GM12878 (cell line): ENCODE measurements at regions of chr14 and their contacts with region 1.

Region 1: GRCh38 chr14:75709207-75709812 is 48.3 kb downstream of the TTLL5 start:
- DNase-seq: peak; percentile 24
- ATAC-seq: peak; percentile 84
- H3K4me3 ChIP-seq: no peak overlapping the region
- H3K27ac ChIP-seq: no peak overlapping the region
- H3K4me1 ChIP-seq: peaks cover 6% of the 10 kb centered on the region
- H3K27me3 ChIP-seq: no peaks in the 10 kb centered on the region
- CTCF ChIP-seq: peak; percentile 75 to 81 (median 81)
- EP300 ChIP-seq: no peak
- POLR2A ChIP-seq: no peak
- RAD21 ChIP-seq: peak; percentile 82

Region 2: DNA sequence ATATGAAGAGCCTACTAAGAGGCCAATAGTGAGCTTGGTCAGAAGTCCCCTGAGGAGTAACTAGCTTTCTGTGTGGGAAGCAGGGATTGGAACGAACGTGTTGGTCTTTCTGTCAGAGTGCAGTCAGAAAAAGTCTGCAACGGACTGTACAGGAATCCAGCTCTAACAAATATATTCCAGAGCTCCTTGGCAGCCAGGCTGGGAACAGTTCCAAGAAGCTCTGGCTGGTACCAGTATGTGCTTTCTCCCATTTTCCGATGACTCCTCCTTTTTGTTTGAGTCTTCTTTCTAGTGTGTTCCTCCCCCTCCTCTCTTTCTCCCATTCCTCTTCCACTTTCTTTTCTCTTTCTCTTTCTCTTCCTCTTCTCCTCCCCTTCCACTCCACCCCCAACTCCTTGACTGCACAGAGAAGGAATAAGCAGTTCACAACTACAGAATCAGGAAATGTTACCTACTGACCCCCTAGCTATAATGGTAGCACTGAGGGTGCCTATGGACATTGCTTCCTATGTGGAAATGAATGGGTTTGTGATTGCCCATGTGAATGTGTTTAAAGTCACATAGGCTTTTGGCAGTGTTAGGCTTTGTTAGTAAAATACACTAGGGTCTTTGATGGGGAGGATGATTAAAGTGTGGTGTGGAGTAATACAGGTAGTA is 11.7 kb after region 1 on chr14:
- CTCF ChIA-PET with region 1: interaction called, 12 read pairs
- POLR2A ChIA-PET with region 1: no interaction called
- RAD21 ChIA-PET with region 1: interaction called, 5 read pairs
- SMC1A ChIA-PET with region 1: interaction called, 7 read pairs
- in situ Hi-C with region 1: no loop called
- intact Hi-C with region 1: no loop called
- DNase-seq: no peak
- ATAC-seq: no peak
- H3K4me3 ChIP-seq: no peak overlapping the region
- H3K27ac ChIP-seq: no peak overlapping the region
- H3K4me1 ChIP-seq: peaks cover 6% of the 10 kb centered on the region
- H3K27me3 ChIP-seq: no peaks in the 10 kb centered on the region
- CTCF ChIP-seq: no peak
- EP300 ChIP-seq: no peak
- POLR2A ChIP-seq: no peak
- RAD21 ChIP-seq: no peak

Region 3: GRCh38 chr14:75794615-75795038 is 85.3 kb after region 1 on chr14:
- CTCF ChIA-PET with region 1: interaction called, 36 read pairs
- POLR2A ChIA-PET with region 1: interaction called, 7 read pairs
- RAD21 ChIA-PET with region 1: interaction called, 25 read pairs
- SMC1A ChIA-PET with region 1: interaction called, 44 read pairs
- in situ Hi-C with region 1: no loop called
- intact Hi-C with region 1: no loop called
- DNase-seq: no peak
- ATAC-seq: peak; percentile 40; the same call in 2 of the 3 replicates
- H3K4me3 ChIP-seq: no peak overlapping the region
- H3K27ac ChIP-seq: no peak overlapping the region
- H3K4me1 ChIP-seq: no peaks in the 10 kb centered on the region
- H3K27me3 ChIP-seq: no peaks in the 10 kb centered on the region
- CTCF ChIP-seq: peak in 2 of 3 experiments; percentile 17 to 37; a peak in 2 of 6 replicates
- EP300 ChIP-seq: no peak
- POLR2A ChIP-seq: no peak
- RAD21 ChIP-seq: no peak

Region 4: DNA sequence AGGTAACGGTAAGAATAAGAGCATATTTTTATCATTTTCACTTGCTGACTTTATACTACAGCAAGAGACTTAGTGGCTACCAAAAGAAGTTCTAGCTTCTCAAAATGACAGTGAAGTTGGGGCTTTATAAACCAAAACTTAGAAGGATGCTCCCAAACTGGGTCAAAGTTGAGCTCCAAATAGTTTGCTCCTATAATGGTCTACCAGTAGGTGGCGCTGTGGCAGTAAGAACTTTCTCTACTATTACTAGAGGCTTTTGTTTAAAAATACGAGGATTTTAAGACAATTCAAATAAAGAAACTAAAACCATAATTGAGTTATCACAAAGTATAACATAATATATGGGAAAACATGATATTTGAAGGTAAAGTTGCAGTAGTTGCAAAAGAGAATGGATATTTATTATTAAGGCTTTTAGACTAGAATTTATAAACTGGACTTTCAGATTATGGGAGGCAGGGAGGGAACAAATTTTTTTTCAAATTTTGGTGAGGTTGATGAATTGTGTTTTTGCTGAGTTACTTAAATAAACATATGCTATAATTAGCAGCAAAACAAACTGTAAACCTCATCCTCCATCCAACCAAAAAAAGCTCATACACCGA is 197.5 kb after region 1 on chr14:
- CTCF ChIA-PET with region 1: interaction called, 100 read pairs
- POLR2A ChIA-PET with region 1: no interaction called
- RAD21 ChIA-PET with region 1: interaction called, 68 read pairs
- SMC1A ChIA-PET with region 1: interaction called, 63 read pairs
- in situ Hi-C with region 1: no loop called
- intact Hi-C with region 1: loop called (anchors 10 kb)
- DNase-seq: no peak
- ATAC-seq: peak; percentile 73
- H3K4me3 ChIP-seq: no peak overlapping the region
- H3K27ac ChIP-seq: no peak overlapping the region
- H3K4me1 ChIP-seq: no peaks in the 10 kb centered on the region
- H3K27me3 ChIP-seq: no peaks in the 10 kb centered on the region
- CTCF ChIP-seq: peak; percentile 69 to 78 (median 71)
- EP300 ChIP-seq: no peak
- POLR2A ChIP-seq: no peak
- RAD21 ChIP-seq: peak; percentile 85

Region 5: GRCh38 chr14:75982266-75983018 is 273.1 kb after region 1 on chr14:
- CTCF ChIA-PET with region 1: interaction called, 276 read pairs
- POLR2A ChIA-PET with region 1: no interaction called
- RAD21 ChIA-PET with region 1: interaction called, 179 read pairs
- SMC1A ChIA-PET with region 1: interaction called, 131 read pairs
- in situ Hi-C with region 1: loop called (anchors 5 kb)
- intact Hi-C with region 1: loop called (anchors 1 kb)
- DNase-seq: no peak
- ATAC-seq: peak; percentile 81
- H3K4me3 ChIP-seq: peak overlapping the region; percentile 92
- H3K27ac ChIP-seq: 0 out of 2 replicates have a peak overlapping the region, but pooled peaks have one; percentile 47
- H3K4me1 ChIP-seq: peaks cover 24% of the 10 kb centered on the region
- H3K27me3 ChIP-seq: no peaks in the 10 kb centered on the region; a peak in 1 of 4 replicates
- CTCF ChIP-seq: peak; percentile 57 to 79 (median 77)
- EP300 ChIP-seq: no peak
- POLR2A ChIP-seq: no peak
- RAD21 ChIP-seq: peak; percentile 80

Region 6: GRCh38 chr14:76050797-76051392 is 341.6 kb after region 1 on chr14:
- CTCF ChIA-PET with region 1: interaction called, 22 read pairs
- POLR2A ChIA-PET with region 1: no interaction called
- RAD21 ChIA-PET with region 1: interaction called, 5 read pairs
- SMC1A ChIA-PET with region 1: interaction called, 13 read pairs
- in situ Hi-C with region 1: no loop called
- intact Hi-C with region 1: no loop called
- DNase-seq: peak; percentile 21
- ATAC-seq: peak; percentile 82
- H3K4me3 ChIP-seq: no peak overlapping the region
- H3K27ac ChIP-seq: no peak overlapping the region
- H3K4me1 ChIP-seq: peaks cover under 1% of the 10 kb centered on the region; the same call in 1 of the 2 replicates
- H3K27me3 ChIP-seq: no peaks in the 10 kb centered on the region
- CTCF ChIP-seq: peak; percentile 53 to 88 (median 80); a peak in 5 of 6 replicates
- EP300 ChIP-seq: no peak
- POLR2A ChIP-seq: no peak
- RAD21 ChIP-seq: peak; percentile 100

Region 7: DNA sequence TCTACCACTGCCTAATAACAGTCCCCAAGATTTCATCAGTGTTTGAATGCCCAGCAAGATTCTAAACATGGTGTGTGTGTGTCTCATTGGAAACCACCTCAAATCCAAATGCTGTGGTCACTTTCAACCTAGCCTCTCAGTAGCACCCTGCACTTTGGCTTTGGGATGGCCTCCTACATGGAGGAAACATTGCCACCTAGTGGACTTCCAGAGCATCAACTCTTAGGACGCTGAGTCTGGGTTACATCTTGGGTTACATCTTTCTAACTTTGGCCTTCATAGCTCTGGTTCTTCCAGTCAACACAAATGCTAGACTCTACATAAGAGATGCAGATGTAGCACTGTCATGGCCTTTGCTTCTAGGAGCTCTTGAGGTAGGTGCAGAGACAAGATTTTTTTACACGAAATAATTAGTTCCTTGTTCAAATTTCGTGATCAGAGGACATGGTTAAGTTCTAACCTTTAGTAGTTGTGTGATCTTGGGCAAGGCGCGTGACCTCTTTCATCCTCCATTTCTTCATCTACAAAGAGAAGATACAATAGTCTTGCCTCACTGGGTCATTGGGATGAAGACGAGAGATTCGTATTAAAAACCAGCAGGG is 938.5 kb after region 1 on chr14:
- CTCF ChIA-PET with region 1: interaction called, 7 read pairs
- POLR2A ChIA-PET with region 1: no interaction called
- RAD21 ChIA-PET with region 1: interaction called, 3 read pairs
- SMC1A ChIA-PET with region 1: no interaction called
- in situ Hi-C with region 1: no loop called
- intact Hi-C with region 1: loop called (anchors 5 kb)
- DNase-seq: no peak
- ATAC-seq: peak; percentile 94
- H3K4me3 ChIP-seq: no peak overlapping the region
- H3K27ac ChIP-seq: no peak overlapping the region
- H3K4me1 ChIP-seq: no peaks in the 10 kb centered on the region
- H3K27me3 ChIP-seq: no peaks in the 10 kb centered on the region
- CTCF ChIP-seq: peak; percentile 75 to 88 (median 87)
- EP300 ChIP-seq: no peak
- POLR2A ChIP-seq: no peak
- RAD21 ChIP-seq: peak; percentile 71